CD8-positive, alpha-beta T cell (primary cell): ENCODE measurements at regions of chr12 and their contacts with region 1.

Region 1: GRCh38 chr12:10453144-10453543 is at the start of gene KLRC1:
- DNase-seq: peak in 1 of 9 experiments; percentile 45
- ATAC-seq: peak; percentile 26
- H3K4me3 ChIP-seq: peak within 1 kb of the TSS in 1 of 2 experiments; percentile 40
- H3K4me3 Mint-ChIP-seq: peak within 1 kb of the TSS; percentile 56
- H3K27ac ChIP-seq: peak within 1 kb of the TSS in 1 of 2 experiments; percentile 28
- H3K27ac Mint-ChIP-seq: no peak within 1 kb of the TSS
- H3K4me1 ChIP-seq: no peaks in the 10 kb centered on the region
- H3K4me1 Mint-ChIP-seq: peaks cover 14% of the 10 kb centered on the region
- H3K27me3 ChIP-seq: no peaks in the 10 kb centered on the region
- H3K27me3 Mint-ChIP-seq: no peaks in the 10 kb centered on the region
- CTCF ChIP-seq: no peak
- total RNA-seq, gene KLRC1: 3.4 to 4.0 TPM

Region 2: GRCh38 chr12:10491766-10492165 is 38.6 kb after region 1 on chr12:
- CTCF ChIA-PET with region 1: no interaction called
- POLR2A ChIA-PET with region 1: no interaction called
- intact Hi-C with region 1: loop called in 1 of 2 experiments (anchors 5 kb)
- DNase-seq: no peak
- ATAC-seq: no peak
- H3K4me3 ChIP-seq: no peak overlapping the region
- H3K4me3 Mint-ChIP-seq: no peak overlapping the region
- H3K27ac ChIP-seq: no peak overlapping the region
- H3K27ac Mint-ChIP-seq: no peak overlapping the region
- H3K4me1 ChIP-seq: peaks cover 6% of the 10 kb centered on the region
- H3K4me1 Mint-ChIP-seq: peaks cover 24% of the 10 kb centered on the region
- H3K27me3 ChIP-seq: no peaks in the 10 kb centered on the region
- H3K27me3 Mint-ChIP-seq: no peaks in the 10 kb centered on the region
- CTCF ChIP-seq: no peak

Region 3: DNA sequence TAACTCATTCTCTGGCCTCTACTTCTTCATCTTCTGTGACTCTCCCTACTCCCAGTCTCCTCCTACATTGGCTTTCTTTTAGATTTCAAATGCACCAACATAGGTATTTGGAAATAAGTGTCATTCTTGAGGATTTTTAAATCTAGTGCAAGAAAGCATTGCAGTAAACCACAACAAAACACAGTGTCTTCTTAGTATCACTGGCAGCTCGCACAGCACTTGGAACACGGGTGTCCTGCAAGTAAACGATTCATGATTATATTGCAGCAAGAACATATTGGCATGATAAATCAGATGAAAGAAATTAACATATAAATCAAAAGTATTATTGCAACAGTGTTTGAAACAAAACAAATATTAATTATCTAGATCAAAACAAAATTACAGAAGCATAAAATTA is 114.7 kb after region 1 on chr12:
- CTCF ChIA-PET with region 1: no interaction called
- POLR2A ChIA-PET with region 1: no interaction called
- intact Hi-C with region 1: no loop called
- DNase-seq: no peak
- ATAC-seq: no peak
- H3K4me3 ChIP-seq: peak overlapping the region in 1 of 2 experiments; percentile 10
- H3K4me3 Mint-ChIP-seq: peak overlapping the region; percentile 65
- H3K27ac ChIP-seq: no peak overlapping the region
- H3K27ac Mint-ChIP-seq: peak overlapping the region; percentile 75
- H3K4me1 ChIP-seq: peaks cover 35% of the 10 kb centered on the region
- H3K4me1 Mint-ChIP-seq: peaks cover 81% of the 10 kb centered on the region
- H3K27me3 ChIP-seq: no peaks in the 10 kb centered on the region
- H3K27me3 Mint-ChIP-seq: no peaks in the 10 kb centered on the region
- CTCF ChIP-seq: no peak